Calu3 (cell line): ENCODE measurements at regions of chr17 and their contacts with region 1.

Region 1: DNA sequence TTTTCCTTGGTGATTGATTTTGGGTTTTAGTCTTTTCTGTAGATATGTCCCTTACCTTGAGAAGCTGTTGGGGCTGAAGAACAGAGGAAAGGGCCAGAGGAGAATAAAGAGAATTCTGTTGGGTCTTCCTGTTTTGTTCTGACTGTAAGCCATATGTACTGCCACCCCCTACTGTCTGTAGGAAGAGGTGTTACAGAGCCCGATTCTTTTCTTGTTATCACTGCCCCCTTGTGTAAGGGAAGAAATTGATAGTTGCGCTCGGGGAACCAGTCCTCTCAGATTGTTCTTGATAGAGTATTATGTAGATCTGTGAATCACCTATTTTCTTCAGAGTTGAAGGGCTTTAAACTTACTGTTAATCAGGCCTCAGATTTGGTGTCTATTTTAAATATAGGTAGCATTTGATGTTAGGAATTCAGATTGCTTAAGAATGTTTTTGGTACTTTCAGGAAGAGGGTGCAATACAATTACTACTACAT is 2.4 kb downstream of the TANC2 start:
- DNase-seq: peak; percentile 61
- H3K4me3 Mint-ChIP-seq: no peak overlapping the region
- H3K27ac Mint-ChIP-seq: no peak overlapping the region
- H3K4me1 Mint-ChIP-seq: peaks cover 19% of the 10 kb centered on the region
- H3K27me3 Mint-ChIP-seq: no peaks in the 10 kb centered on the region
- CTCF ChIP-seq: peak; percentile 68

Region 2: GRCh38 chr17:62671583-62672312 is 296.7 kb before region 1 on chr17:
- CTCF ChIA-PET with region 1: no interaction called
- intact Hi-C with region 1: loop called (anchors 1 kb)
- DNase-seq: peak; percentile 58
- H3K4me3 Mint-ChIP-seq: peak overlapping the region; percentile 16
- H3K27ac Mint-ChIP-seq: no peak overlapping the region
- H3K4me1 Mint-ChIP-seq: peaks cover 17% of the 10 kb centered on the region
- H3K27me3 Mint-ChIP-seq: no peaks in the 10 kb centered on the region
- CTCF ChIP-seq: no peak

Region 3: GRCh38 chr17:62703775-62704378 is 264.6 kb before region 1 on chr17:
- CTCF ChIA-PET with region 1: no interaction called
- intact Hi-C with region 1: loop called (anchors 1 kb)
- DNase-seq: peak; percentile 82
- H3K4me3 Mint-ChIP-seq: peak overlapping the region; percentile 62
- H3K27ac Mint-ChIP-seq: no peak overlapping the region
- H3K4me1 Mint-ChIP-seq: peaks cover 15% of the 10 kb centered on the region
- H3K27me3 Mint-ChIP-seq: no peaks in the 10 kb centered on the region
- CTCF ChIP-seq: peak; percentile 76

Region 4: DNA sequence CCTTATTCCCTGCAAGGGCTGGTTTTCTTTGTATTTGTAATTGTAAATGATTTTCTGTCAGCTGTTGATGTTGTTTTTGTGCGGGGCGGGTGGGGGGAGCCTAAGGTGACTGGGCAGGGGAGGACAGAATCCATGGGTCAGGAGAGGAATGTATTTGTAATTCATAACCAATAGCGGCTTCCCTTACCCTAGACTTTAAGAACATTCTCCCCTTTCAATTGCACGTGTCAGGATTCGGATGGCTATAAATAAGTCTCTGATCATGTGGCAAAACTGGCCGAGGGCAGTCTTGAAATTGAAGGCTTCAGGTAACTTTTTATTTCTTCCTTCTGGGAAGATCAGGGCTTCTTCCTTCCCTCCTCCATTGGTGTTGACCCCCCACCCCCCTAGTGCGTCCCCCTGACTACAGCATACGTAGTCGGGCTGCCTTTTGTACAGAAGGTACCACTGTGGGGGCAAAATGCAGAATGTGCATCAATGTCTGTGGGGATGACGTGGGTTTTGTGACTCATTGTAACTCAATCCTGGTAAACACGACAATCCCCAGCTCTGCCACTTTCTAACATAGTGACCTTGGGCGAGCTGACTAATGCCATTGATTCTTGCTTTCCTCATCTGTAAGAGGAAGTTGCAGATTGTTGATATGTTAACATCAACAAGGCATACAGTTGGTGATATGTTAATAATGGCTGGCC is 176.6 kb before region 1 on chr17:
- CTCF ChIA-PET with region 1: interaction called, 6 read pairs
- intact Hi-C with region 1: loop called (anchors 5 kb)
- DNase-seq: peak; percentile 69
- H3K4me3 Mint-ChIP-seq: peak overlapping the region; percentile 63
- H3K27ac Mint-ChIP-seq: peak overlapping the region; percentile 94
- H3K4me1 Mint-ChIP-seq: peaks cover 38% of the 10 kb centered on the region
- H3K27me3 Mint-ChIP-seq: no peaks in the 10 kb centered on the region
- CTCF ChIP-seq: no peak

Region 5: GRCh38 chr17:62819475-62820212 is 148.8 kb before region 1 on chr17:
- CTCF ChIA-PET with region 1: no interaction called
- intact Hi-C with region 1: loop called (anchors 10 kb)
- DNase-seq: peak; percentile 49
- H3K4me3 Mint-ChIP-seq: no peak overlapping the region
- H3K27ac Mint-ChIP-seq: peak overlapping the region; percentile 18
- H3K4me1 Mint-ChIP-seq: peaks cover 15% of the 10 kb centered on the region
- H3K27me3 Mint-ChIP-seq: no peaks in the 10 kb centered on the region
- CTCF ChIP-seq: no peak

Region 6: GRCh38 chr17:62892870-62893338 is 75.6 kb before region 1 on chr17:
- CTCF ChIA-PET with region 1: no interaction called
- intact Hi-C with region 1: loop called (anchors 10 kb)
- DNase-seq: peak; percentile 54
- H3K4me3 Mint-ChIP-seq: no peak overlapping the region
- H3K27ac Mint-ChIP-seq: peak overlapping the region; percentile 56
- H3K4me1 Mint-ChIP-seq: peaks cover 16% of the 10 kb centered on the region
- H3K27me3 Mint-ChIP-seq: no peaks in the 10 kb centered on the region
- CTCF ChIP-seq: no peak